RWPE1 (cell line): ENCODE measurements at regions of chr5 and their contacts with region 1.

Region 1: DNA sequence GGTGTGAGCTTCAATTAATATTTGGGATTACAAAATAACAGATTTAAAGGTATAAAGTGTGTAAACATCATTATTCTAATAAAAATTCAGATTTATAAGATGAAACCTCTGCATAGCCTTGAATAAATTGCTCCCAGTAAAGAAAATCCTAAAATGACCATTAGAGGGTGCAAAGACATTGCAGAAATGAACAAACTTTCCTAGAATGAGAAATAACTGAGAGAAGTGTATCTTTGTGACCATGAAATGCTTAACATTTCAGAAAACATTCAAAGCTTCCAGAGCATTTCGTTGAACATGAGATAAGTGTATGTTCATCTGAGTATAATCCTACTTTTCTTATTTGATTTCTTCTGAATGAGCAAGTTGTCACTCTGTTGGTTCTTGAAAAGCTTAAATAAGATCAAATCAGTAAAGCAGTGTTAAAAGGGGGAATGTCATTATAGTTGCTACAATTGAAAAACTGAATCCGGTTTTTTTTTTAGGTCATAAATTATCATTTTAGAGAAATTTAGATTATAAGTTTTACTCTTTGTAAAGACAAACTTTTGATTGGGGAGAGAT is 24.7 kb upstream of the NUDT12 start:
- DNase-seq: peak; percentile 11
- H3K27ac ChIP-seq: no peak overlapping the region
- CTCF ChIP-seq: peak; percentile 74

Region 2: GRCh38 chr5:102450313-102450990 is 1136.8 kb before region 1 on chr5:
- CTCF ChIA-PET with region 1: interaction called, 11 read pairs
- POLR2A ChIA-PET with region 1: no interaction called
- DNase-seq: no peak
- H3K27ac ChIP-seq: no peak overlapping the region
- CTCF ChIP-seq: no peak; the same call in 1 of the 2 replicates

Region 3: DNA sequence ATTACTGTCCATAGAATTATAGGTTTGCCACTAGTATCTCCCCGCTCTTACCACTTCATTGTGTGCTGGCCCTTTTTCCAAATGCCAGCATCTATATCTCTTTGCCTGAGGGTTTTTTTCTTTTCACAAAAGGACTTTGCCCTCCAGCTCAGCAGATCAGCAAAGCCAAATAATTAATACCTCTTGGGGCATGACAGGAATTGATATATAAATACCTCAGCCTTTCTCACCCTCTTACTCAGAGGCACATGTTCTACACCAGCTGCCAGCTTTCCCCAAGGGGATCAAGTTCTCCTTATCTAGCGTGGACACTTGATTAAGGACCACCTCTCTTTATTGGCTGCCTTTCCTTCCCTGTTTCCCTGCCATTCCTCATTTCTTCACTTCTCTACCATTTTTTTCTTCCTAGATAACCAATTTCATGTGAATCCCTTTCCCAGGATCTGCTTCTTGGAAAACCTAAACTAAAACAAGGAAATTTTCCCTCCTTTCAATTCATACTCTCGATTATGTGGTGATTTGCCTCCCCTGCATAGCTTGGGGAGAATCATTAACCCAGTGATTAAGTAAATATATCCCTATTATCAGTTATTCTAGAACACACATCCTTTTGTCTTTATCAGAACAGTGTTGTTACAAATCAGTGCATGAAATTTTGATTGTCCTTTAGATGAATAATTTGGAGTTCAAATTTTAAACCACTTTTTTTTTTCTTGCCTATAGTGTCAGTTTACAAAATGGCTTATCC is 17.8 kb before region 1 on chr5:
- CTCF ChIA-PET with region 1: no interaction called
- POLR2A ChIA-PET with region 1: no interaction called
- DNase-seq: no peak
- H3K27ac ChIP-seq: no peak overlapping the region
- CTCF ChIP-seq: no peak